ENCODE measurements at regions of chr3 and their contacts with region 1.

Region 1: GRCh38 chr3:38950581-38950980 is 101.2 kb downstream of the SCN11A start:
- DNase-seq: no peak
- H3K4me3 ChIP-seq: no peak overlapping the region
- H3K27ac ChIP-seq: no peak overlapping the region
- H3K4me1 ChIP-seq: no peaks in the 10 kb centered on the region
- H3K27me3 ChIP-seq: no peaks in the 10 kb centered on the region
- CTCF ChIP-seq: no peak
- POLR2A ChIP-seq: no peak

Region 2: DNA sequence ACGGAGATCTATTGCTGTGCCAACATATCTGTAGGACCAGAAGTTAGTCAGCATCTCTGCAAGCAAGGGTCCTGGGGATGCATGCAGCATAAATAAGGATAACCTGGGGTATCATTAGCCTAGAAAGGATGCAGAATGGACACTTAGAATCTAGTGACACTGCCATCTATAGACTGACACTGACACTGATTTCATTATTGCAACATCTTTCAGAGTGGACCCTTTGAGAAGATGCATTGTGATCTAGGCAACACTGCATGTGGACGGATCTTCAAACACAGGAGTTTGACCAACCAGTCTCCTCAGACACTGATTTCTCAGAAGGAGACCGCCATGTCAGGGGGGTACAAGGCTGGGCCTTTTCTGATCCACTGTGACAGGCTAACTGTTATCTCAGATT is 187.0 kb before region 1 on chr3:
- intact Hi-C with region 1: no loop called
- DNase-seq: no peak
- H3K4me3 ChIP-seq: no peak overlapping the region
- H3K27ac ChIP-seq: no peak overlapping the region
- H3K4me1 ChIP-seq: no peaks in the 10 kb centered on the region
- H3K27me3 ChIP-seq: no peaks in the 10 kb centered on the region
- CTCF ChIP-seq: no peak
- POLR2A ChIP-seq: no peak

Region 3: DNA sequence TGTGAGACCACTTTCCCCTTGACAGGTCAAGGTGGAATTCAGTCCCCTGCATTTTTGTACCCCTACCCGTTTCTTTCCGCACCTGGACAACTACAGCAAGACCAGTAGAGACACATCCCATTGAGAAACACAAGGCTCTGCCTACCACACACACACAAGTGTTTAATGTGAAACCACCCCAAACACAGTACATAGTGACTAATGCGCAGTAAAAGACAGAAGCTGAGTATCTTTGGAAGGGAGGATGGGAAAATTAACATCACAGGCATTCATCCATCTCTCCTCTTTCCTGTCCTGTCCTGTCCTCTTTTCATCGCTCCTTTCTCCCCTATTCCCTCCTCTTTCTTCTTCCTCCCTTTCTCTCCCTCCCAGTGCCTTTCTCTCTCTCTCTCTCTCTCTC is 36.3 kb after region 1 on chr3:
- intact Hi-C with region 1: loop called (anchors 1 kb)
- DNase-seq: no peak
- H3K4me3 ChIP-seq: no peak overlapping the region
- H3K27ac ChIP-seq: no peak overlapping the region
- H3K4me1 ChIP-seq: no peaks in the 10 kb centered on the region
- H3K27me3 ChIP-seq: no peaks in the 10 kb centered on the region
- CTCF ChIP-seq: no peak
- POLR2A ChIP-seq: no peak

Region 4: DNA sequence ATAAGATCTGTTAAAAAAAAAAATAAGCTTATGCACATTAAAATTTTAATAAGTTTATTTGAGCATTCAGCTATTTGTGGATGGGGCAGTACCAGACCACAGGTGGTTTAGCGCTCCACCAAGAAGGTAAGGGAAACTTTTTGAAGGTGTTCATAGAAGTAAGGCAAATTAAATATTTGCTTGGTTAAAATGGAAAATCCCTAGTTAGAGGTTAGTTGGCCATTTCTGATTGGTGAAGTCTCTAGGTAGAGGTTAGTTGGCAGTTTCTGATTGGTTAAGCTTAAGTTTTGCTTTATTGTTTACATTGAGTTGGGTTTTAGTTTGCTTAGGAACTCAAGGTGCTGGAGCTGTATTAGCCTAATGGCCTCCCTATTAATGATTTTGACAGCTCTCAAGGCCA is 70.4 kb after region 1 on chr3:
- intact Hi-C with region 1: no loop called
- DNase-seq: no peak
- H3K4me3 ChIP-seq: no peak overlapping the region
- H3K27ac ChIP-seq: no peak overlapping the region
- H3K4me1 ChIP-seq: no peaks in the 10 kb centered on the region
- H3K27me3 ChIP-seq: no peaks in the 10 kb centered on the region
- CTCF ChIP-seq: no peak
- POLR2A ChIP-seq: no peak